PC-9 (cell line): ENCODE measurements at regions of chr15 and their contacts with region 1.

Region 1: GRCh38 chr15:95770191-95770590 is 560.3 kb upstream of the NR2F2 start:
- DNase-seq: peak; percentile 56 to 63
- H3K4me3 ChIP-seq: no peak overlapping the region
- H3K27ac ChIP-seq: no peak overlapping the region
- H3K4me1 ChIP-seq: no peaks in the 10 kb centered on the region; the same call in 1 of the 2 replicates
- H3K27me3 ChIP-seq: no peaks in the 10 kb centered on the region
- CTCF ChIP-seq: no peak

Region 2: GRCh38 chr15:95494971-95495541 is 275.1 kb before region 1 on chr15:
- CTCF ChIA-PET with region 1: no interaction called
- POLR2A ChIA-PET with region 1: no interaction called
- intact Hi-C with region 1: no loop called
- DNase-seq: no peak
- H3K4me3 ChIP-seq: no peak overlapping the region
- H3K27ac ChIP-seq: no peak overlapping the region
- H3K4me1 ChIP-seq: peaks cover 4% of the 10 kb centered on the region; the same call in 1 of the 2 replicates
- H3K27me3 ChIP-seq: no peaks in the 10 kb centered on the region
- CTCF ChIP-seq: no peak

Region 3: GRCh38 chr15:95857124-95857757 is 87.0 kb after region 1 on chr15:
- CTCF ChIA-PET with region 1: no interaction called
- POLR2A ChIA-PET with region 1: no interaction called
- intact Hi-C with region 1: no loop called
- DNase-seq: no peak
- H3K4me3 ChIP-seq: no peak overlapping the region
- H3K27ac ChIP-seq: no peak overlapping the region
- H3K4me1 ChIP-seq: peaks cover 10% of the 10 kb centered on the region
- H3K27me3 ChIP-seq: no peaks in the 10 kb centered on the region
- CTCF ChIP-seq: no peak

Region 4: DNA sequence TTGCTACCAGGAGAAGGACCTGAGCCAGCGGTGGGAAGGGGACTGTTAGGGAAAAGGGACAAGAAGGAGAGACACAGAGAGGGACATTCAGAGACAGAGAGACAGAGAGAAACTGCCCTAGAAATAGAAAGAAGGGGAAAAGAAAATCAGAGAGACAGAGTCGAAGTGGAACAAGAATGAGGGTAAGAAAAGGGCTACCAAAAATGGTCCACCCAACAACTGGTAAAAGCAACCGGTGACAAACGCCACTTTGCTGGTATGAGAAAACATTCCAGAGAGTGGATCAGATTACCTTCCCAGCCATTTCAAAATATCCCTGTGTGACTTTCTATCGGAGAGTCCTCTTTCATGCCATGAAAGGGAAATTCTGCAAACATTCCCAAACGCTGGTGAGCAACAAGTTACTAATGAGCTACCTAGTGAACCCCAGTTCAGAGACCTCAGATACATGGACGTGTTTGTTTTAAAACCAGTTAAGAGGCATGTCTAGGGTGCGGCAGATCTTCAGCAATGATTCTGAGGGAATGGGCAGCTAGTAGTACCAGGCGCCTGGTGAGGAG is 142.0 kb after region 1 on chr15:
- CTCF ChIA-PET with region 1: no interaction called
- POLR2A ChIA-PET with region 1: no interaction called
- intact Hi-C with region 1: loop called (anchors 1 kb)
- DNase-seq: peak; percentile 38 to 47
- H3K4me3 ChIP-seq: no peak overlapping the region
- H3K27ac ChIP-seq: no peak overlapping the region
- H3K4me1 ChIP-seq: no peaks in the 10 kb centered on the region
- H3K27me3 ChIP-seq: no peaks in the 10 kb centered on the region
- CTCF ChIP-seq: no peak

Region 5: DNA sequence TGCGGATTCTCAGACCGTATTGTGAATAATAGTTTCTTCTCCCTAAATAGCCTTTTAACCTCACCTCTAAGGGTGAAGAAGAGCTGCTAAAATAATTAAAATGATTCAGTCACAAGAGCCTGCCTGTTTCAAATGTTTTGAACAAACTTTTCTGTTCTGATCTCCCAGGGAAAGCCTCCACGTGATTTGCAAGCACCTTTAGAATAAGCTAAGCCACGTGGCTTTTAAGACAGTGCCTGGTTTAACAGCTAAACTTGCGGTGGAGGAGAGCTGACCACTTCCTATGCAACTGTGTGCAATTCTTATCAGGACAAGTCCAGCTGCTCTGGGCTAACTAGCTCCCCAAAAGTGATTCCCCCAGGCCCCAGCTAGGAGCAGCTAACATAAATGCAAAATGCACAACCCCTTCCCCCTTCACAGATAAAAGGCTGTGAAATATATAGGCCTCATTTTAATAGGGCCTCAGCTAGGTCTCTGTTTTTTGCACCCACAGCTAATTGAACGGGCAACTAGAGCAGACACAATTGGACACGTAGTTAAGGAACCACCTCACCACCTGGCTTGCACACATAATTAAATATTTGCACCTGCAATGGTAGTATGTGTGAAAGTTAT is 159.1 kb after region 1 on chr15:
- CTCF ChIA-PET with region 1: no interaction called
- POLR2A ChIA-PET with region 1: no interaction called
- intact Hi-C with region 1: no loop called
- DNase-seq: no peak
- H3K4me3 ChIP-seq: no peak overlapping the region
- H3K27ac ChIP-seq: no peak overlapping the region
- H3K4me1 ChIP-seq: no peaks in the 10 kb centered on the region; the same call in 1 of the 2 replicates
- H3K27me3 ChIP-seq: no peaks in the 10 kb centered on the region
- CTCF ChIP-seq: no peak